Activated CD8-positive, alpha-beta T cell treated with anti-CD3 and anti-CD28 coated beads for 36 hours (primary cell): ENCODE measurements at regions of chr14 and their contacts with region 1.

Region 1: GRCh38 chr14:71753126-71753830 is 179.0 kb upstream of the RGS6 start:
- DNase-seq: peak; percentile 83
- ATAC-seq: peak; percentile 49
- H3K4me3 Mint-ChIP-seq: no peak overlapping the region
- H3K27ac Mint-ChIP-seq: no peak overlapping the region
- H3K4me1 Mint-ChIP-seq: no peaks in the 10 kb centered on the region
- H3K27me3 Mint-ChIP-seq: peaks cover 1% of the 10 kb centered on the region
- CTCF ChIP-seq: peak; percentile 97

Region 2: DNA sequence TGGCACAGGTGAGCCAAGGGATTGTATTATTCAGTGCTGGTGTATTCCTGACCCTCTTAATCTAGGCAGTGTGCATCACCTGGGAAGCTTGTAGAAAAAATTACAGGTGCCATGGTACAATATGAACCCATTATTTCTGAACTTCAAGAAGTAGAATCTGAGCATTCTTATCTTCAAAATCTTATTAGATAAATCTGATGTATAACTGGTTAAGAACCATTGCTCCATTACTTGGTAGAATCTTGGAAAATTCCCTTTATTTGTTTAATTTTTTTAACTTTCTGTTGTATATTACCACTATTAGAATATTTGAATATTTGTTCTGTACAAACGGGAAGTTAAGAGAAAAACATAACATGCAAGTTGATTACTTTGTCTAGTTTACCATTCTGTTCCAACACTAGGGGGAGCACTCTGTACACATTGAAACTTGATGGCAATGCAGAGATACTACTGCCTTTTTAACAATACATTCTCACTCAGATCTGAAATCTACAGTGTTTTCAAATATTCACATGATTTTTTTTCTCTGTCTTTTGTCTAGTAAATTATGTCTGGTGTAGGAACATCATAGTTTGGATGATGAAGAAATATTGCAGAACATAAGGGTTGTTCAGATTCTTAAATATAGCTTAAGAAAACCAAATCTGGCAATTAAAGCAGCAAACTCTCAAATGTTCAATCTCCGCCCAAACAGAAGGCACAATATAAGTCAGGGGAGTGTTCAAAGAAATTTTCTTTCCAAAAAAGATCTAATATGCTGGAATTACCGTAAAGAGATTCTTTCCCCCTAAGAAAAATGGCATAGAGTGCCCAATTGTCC is 649.4 kb before region 1 on chr14:
- CTCF ChIA-PET with region 1: interaction called, 23 read pairs
- POLR2A ChIA-PET with region 1: no interaction called
- intact Hi-C with region 1: loop called (anchors 10 kb)
- DNase-seq: no peak
- ATAC-seq: peak; percentile 47
- H3K4me3 Mint-ChIP-seq: no peak overlapping the region
- H3K27ac Mint-ChIP-seq: peak overlapping the region; percentile 2
- H3K4me1 Mint-ChIP-seq: peaks cover 3% of the 10 kb centered on the region
- H3K27me3 Mint-ChIP-seq: no peaks in the 10 kb centered on the region
- CTCF ChIP-seq: peak; percentile 93

Region 3: DNA sequence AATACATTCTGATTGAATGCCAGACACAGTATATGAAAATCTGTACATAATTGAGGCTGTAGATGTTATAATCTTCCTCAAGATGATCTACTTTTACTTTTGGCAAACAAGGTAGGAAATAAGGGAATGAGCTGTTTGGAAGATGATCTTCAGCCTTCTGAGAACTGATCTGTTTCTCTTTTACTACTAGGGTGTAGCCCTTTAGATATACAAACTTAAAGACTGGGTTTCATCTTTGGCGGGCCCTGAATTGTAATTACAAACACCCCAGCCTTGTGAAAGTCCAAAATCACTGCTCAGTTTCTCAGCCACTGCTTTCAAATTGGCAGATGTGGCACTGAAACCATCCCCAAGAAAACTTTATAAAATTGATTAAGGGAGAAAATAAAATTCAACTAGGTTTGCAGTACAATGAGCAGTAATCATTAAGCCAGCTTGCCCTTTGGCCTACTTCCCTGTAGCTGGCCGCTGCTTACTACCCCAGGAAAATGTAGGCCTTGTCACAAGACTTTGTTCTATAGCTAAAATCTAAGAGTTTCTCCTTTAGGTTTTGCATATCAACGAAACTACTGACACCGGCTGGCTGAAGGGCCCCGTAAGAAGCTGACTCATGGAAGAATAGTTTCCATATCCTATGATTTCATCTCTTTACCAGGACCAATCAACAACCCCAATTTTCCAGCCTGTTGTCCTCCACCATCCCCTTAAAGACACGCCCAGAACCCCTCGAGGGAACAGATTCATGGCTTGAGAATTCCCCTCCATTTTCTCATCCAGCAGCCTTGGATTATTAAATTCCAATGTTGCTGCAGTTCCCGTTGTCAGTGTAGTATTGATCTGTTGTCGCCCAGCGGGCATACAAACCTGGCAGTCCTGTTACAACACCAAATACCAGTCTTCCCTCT is 635.2 kb before region 1 on chr14:
- CTCF ChIA-PET with region 1: interaction called, 12 read pairs
- POLR2A ChIA-PET with region 1: no interaction called
- intact Hi-C with region 1: no loop called
- DNase-seq: no peak
- ATAC-seq: peak; percentile 29
- H3K4me3 Mint-ChIP-seq: no peak overlapping the region
- H3K27ac Mint-ChIP-seq: peak overlapping the region; percentile 53
- H3K4me1 Mint-ChIP-seq: peaks cover 17% of the 10 kb centered on the region
- H3K27me3 Mint-ChIP-seq: no peaks in the 10 kb centered on the region
- CTCF ChIP-seq: no peak

Region 4: DNA sequence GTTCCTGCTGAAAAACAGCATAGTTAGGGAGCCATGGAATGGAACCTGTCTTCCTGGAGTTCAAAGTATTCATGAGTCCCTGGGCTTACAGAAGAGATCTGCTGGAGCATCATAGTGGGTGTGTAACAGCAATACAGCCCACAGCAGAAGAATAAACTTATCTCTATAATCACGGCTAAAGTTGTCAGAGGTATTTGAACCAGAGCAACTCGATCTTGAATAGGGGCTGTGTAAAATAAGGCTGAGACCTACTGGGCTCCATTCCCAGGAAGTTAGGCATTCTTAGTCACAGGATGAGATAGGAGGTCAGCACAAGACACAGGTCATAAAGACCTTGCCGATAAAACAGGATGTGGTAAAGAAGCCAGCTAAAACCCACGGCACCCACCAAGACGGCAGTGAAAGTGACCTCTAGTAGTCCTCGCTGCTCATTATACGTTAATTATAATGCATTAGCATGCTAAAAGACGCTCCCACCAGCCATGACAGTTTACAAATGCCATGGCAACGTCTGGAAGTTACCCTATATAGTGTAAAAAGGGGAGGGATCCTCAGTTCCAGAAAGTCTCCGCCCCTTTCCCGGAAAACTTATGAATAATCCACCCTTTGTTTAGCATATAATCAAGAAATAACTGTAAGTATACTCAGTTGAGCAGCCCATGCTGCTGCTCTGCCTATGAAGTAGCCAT is 622.6 kb before region 1 on chr14:
- CTCF ChIA-PET with region 1: interaction called, 21 read pairs
- POLR2A ChIA-PET with region 1: no interaction called
- intact Hi-C with region 1: no loop called
- DNase-seq: peak; percentile 49
- ATAC-seq: peak; percentile 66
- H3K4me3 Mint-ChIP-seq: no peak overlapping the region
- H3K27ac Mint-ChIP-seq: no peak overlapping the region
- H3K4me1 Mint-ChIP-seq: peaks cover 9% of the 10 kb centered on the region
- H3K27me3 Mint-ChIP-seq: peaks cover 2% of the 10 kb centered on the region
- CTCF ChIP-seq: no peak

Region 5: DNA sequence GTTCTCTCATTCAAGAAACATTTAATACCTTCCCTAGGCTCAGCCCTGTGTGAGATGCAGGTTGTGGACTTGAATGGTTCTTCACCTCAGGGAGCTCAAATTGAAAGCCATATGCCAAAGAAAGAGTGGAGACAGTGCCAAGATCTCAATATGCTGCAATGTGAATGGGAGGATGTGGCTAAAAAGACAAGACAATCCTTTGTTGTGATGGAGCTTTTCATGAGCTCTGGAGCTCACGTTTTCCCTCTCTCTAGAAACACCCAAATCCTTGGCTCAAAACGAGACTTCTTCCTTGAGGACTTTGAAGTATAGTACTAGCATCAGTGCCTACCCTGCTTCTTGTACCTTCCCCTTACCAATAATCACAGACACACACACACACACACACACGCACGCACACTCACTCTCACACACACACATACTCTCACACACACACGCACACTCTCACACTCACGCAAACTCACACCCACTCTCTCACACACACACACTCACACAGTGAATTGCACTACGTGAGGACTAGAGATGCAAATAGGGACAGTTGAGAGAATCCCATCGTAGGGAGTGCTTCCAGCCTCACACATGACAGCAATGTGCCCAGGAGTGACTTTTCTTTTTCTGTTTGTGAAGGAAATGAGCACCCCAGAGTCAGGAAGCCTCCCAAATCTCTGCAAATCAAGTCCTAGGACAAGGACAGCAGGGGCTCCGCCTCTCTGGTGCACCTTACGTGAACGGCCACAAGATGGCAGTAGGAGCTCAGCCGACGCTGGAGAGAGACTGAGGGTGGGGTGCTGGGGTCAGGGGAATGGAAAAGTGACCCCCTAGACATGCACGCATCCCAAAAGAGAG is 614.6 kb before region 1 on chr14:
- CTCF ChIA-PET with region 1: interaction called, 37 read pairs
- POLR2A ChIA-PET with region 1: interaction called, 3 read pairs
- intact Hi-C with region 1: loop called (anchors 2 kb)
- DNase-seq: peak; percentile 68
- ATAC-seq: no peak
- H3K4me3 Mint-ChIP-seq: no peak overlapping the region
- H3K27ac Mint-ChIP-seq: no peak overlapping the region
- H3K4me1 Mint-ChIP-seq: peaks cover 23% of the 10 kb centered on the region
- H3K27me3 Mint-ChIP-seq: no peaks in the 10 kb centered on the region
- CTCF ChIP-seq: peak; percentile 97

Region 6: GRCh38 chr14:71764701-71765382 is 11.6 kb after region 1 on chr14:
- CTCF ChIA-PET with region 1: interaction called, 16 read pairs
- POLR2A ChIA-PET with region 1: interaction called, 4 read pairs
- intact Hi-C with region 1: no loop called
- DNase-seq: no peak
- ATAC-seq: no peak
- H3K4me3 Mint-ChIP-seq: no peak overlapping the region
- H3K27ac Mint-ChIP-seq: no peak overlapping the region
- H3K4me1 Mint-ChIP-seq: no peaks in the 10 kb centered on the region
- H3K27me3 Mint-ChIP-seq: peaks cover 14% of the 10 kb centered on the region
- CTCF ChIP-seq: no peak

Region 7: GRCh38 chr14:71799841-71800240 is 46.6 kb after region 1 on chr14:
- CTCF ChIA-PET with region 1: no interaction called
- POLR2A ChIA-PET with region 1: no interaction called
- intact Hi-C with region 1: no loop called
- DNase-seq: no peak
- ATAC-seq: no peak
- H3K4me3 Mint-ChIP-seq: no peak overlapping the region
- H3K27ac Mint-ChIP-seq: no peak overlapping the region
- H3K4me1 Mint-ChIP-seq: no peaks in the 10 kb centered on the region
- H3K27me3 Mint-ChIP-seq: peaks cover 11% of the 10 kb centered on the region
- CTCF ChIP-seq: no peak

Region 8: GRCh38 chr14:71855399-71856036 is 102.2 kb after region 1 on chr14:
- CTCF ChIA-PET with region 1: interaction called, 12 read pairs
- POLR2A ChIA-PET with region 1: no interaction called
- intact Hi-C with region 1: no loop called
- DNase-seq: peak; percentile 77
- ATAC-seq: no peak
- H3K4me3 Mint-ChIP-seq: no peak overlapping the region
- H3K27ac Mint-ChIP-seq: no peak overlapping the region
- H3K4me1 Mint-ChIP-seq: peaks cover 8% of the 10 kb centered on the region
- H3K27me3 Mint-ChIP-seq: peaks cover 37% of the 10 kb centered on the region
- CTCF ChIP-seq: peak; percentile 86